CD8-positive, alpha-beta T cell (primary cell): ENCODE measurements at regions of chr6 and their contacts with region 1.

Region 1: DNA sequence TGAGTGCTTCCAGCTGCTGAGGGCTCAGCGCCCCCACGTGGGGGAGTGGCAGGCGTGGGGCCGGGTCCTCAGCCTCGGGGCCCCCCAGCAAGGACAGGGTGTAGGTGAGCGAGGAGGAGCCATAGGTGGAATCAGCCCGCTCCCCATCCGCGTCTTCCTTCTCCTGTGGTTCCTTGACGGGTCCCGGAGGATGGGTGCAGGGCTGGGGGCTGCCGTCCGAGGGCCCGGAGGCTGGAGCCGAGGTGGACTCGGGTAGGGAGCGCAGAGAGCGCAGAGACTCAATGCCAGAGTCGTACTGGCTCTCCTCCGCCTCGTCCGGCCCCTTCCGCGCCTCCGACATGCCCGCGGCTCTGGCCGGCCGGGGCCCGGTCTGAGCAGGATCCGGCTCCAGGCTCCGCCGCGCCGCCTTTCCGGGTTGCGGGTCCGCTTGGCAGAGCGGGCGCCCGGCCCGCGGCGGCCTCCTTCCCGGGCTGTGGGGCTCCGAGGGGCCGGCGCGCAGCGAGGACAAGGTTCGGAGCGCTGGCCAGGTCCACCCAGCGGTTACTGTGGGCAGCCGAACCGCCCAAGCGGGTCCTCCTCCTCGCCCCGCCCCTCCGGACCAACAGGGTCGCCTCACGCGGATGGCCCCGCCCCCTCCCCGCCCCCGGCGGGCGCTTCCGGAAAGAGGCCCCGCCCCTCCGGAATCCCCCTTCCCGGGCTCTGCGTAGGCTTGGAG is at the start of gene NFKBIE:
- DNase-seq: peak; percentile 87 to 96 (median 94)
- ATAC-seq: peak; percentile 82
- H3K4me3 ChIP-seq: peak within 1 kb of the TSS; percentile 90 to 91
- H3K4me3 Mint-ChIP-seq: peak within 1 kb of the TSS; percentile 83
- H3K27ac ChIP-seq: peak within 1 kb of the TSS; percentile 78 to 89
- H3K27ac Mint-ChIP-seq: peak within 1 kb of the TSS; percentile 85
- H3K4me1 ChIP-seq: peaks cover 31% of the 10 kb centered on the region
- H3K4me1 Mint-ChIP-seq: peaks cover 46% of the 10 kb centered on the region
- H3K27me3 ChIP-seq: peaks cover 0 to 8% of the 10 kb centered on the region in 2 experiments
- H3K27me3 Mint-ChIP-seq: peaks cover 8% of the 10 kb centered on the region
- CTCF ChIP-seq: peak; percentile 44
- total RNA-seq, gene NFKBIE: 44.5 to 45.8 TPM

Region 2: GRCh38 chr6:44221291-44221960 is 43.7 kb before region 1 on chr6:
- CTCF ChIA-PET with region 1: interaction called, 12 read pairs
- POLR2A ChIA-PET with region 1: no interaction called
- intact Hi-C with region 1: loop called (anchors 1 kb)
- DNase-seq: peak; percentile 53 to 85 (median 72)
- ATAC-seq: peak; percentile 60
- H3K4me3 ChIP-seq: no peak overlapping the region
- H3K4me3 Mint-ChIP-seq: no peak overlapping the region
- H3K27ac ChIP-seq: no peak overlapping the region
- H3K27ac Mint-ChIP-seq: no peak overlapping the region
- H3K4me1 ChIP-seq: peaks cover 28% of the 10 kb centered on the region
- H3K4me1 Mint-ChIP-seq: peaks cover 41% of the 10 kb centered on the region
- H3K27me3 ChIP-seq: peaks cover 0 to 8% of the 10 kb centered on the region in 2 experiments
- H3K27me3 Mint-ChIP-seq: peaks cover 3% of the 10 kb centered on the region
- CTCF ChIP-seq: peak; percentile 47

Region 3: GRCh38 chr6:44285552-44286284 is 20.6 kb after region 1 on chr6:
- CTCF ChIA-PET with region 1: no interaction called
- POLR2A ChIA-PET with region 1: no interaction called
- intact Hi-C with region 1: no loop called
- DNase-seq: no peak
- ATAC-seq: no peak
- H3K4me3 ChIP-seq: no peak overlapping the region
- H3K4me3 Mint-ChIP-seq: no peak overlapping the region
- H3K27ac ChIP-seq: no peak overlapping the region
- H3K27ac Mint-ChIP-seq: no peak overlapping the region
- H3K4me1 ChIP-seq: no peaks in the 10 kb centered on the region
- H3K4me1 Mint-ChIP-seq: no peaks in the 10 kb centered on the region
- H3K27me3 ChIP-seq: peaks cover 8 to 9% of the 10 kb centered on the region in 2 experiments
- H3K27me3 Mint-ChIP-seq: peaks cover 64% of the 10 kb centered on the region
- CTCF ChIP-seq: no peak

Region 4: GRCh38 chr6:44304282-44305199 is 39.4 kb after region 1 on chr6:
- CTCF ChIA-PET with region 1: interaction called, 73 read pairs
- POLR2A ChIA-PET with region 1: no interaction called
- intact Hi-C with region 1: loop called (anchors 1 kb)
- DNase-seq: peak; percentile 9 to 67 (median 49)
- ATAC-seq: peak; percentile 94
- H3K4me3 ChIP-seq: no peak overlapping the region
- H3K4me3 Mint-ChIP-seq: no peak overlapping the region
- H3K27ac ChIP-seq: no peak overlapping the region
- H3K27ac Mint-ChIP-seq: no peak overlapping the region
- H3K4me1 ChIP-seq: no peaks in the 10 kb centered on the region
- H3K4me1 Mint-ChIP-seq: no peaks in the 10 kb centered on the region
- H3K27me3 ChIP-seq: no peaks in the 10 kb centered on the region
- H3K27me3 Mint-ChIP-seq: no peaks in the 10 kb centered on the region
- CTCF ChIP-seq: peak; percentile 80

Region 5: DNA sequence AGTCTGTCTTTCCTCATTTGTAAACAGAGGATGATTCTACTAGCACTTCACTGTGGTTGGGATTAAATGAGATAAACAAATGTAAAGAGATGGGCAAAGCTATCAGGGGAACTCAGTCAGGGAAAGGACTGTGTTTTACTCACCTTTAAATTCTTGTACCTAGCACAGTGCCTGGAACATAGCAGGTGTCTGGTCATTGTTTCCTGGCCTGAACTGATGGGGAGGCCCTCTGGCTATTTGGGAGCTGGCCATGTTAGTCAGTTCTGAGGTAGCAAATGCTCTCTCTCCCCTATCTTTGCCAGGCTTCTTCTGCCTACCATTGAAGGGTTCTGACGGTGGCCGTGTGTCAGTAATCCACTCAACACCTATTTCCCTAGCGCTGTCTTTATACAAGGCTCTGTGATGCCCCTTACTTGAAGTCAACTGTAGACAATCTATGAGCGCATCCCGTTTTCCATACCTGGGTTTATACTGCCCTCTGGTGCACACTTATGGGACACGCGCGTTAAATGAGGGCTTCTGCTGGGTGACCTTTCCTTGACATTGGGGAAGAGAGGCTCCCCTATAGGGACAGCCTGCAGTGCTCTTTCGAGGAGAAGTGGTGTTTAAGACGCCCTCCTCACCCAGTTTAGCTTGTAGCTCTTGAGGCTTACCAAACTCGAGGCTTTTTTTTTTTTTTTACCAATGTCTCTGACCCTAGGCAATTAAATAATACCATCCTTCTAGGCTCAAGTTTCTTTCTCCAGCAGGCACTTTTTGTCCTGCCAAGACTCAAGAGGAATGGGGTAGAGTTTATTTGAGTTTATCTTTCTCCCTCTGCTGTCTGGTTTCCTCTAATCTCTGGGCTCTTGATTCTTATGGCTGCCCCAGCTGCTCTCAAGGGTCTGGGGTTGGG is 73.3 kb after region 1 on chr6:
- CTCF ChIA-PET with region 1: interaction called, 79 read pairs
- POLR2A ChIA-PET with region 1: no interaction called
- intact Hi-C with region 1: loop called in 1 of 2 experiments (anchors 1 kb)
- DNase-seq: peak; percentile 33 to 78 (median 63)
- ATAC-seq: peak; percentile 94
- H3K4me3 ChIP-seq: no peak overlapping the region
- H3K4me3 Mint-ChIP-seq: no peak overlapping the region
- H3K27ac ChIP-seq: no peak overlapping the region
- H3K27ac Mint-ChIP-seq: no peak overlapping the region
- H3K4me1 ChIP-seq: no peaks in the 10 kb centered on the region
- H3K4me1 Mint-ChIP-seq: no peaks in the 10 kb centered on the region
- H3K27me3 ChIP-seq: peaks cover 0 to 3% of the 10 kb centered on the region in 2 experiments
- H3K27me3 Mint-ChIP-seq: peaks cover 18% of the 10 kb centered on the region
- CTCF ChIP-seq: peak; percentile 78

Region 6: GRCh38 chr6:44456070-44456965 is 191.2 kb after region 1 on chr6:
- CTCF ChIA-PET with region 1: interaction called, 3 read pairs
- POLR2A ChIA-PET with region 1: no interaction called
- intact Hi-C with region 1: loop called (anchors 2 to 5 kb)
- DNase-seq: peak in 6 of 9 experiments; percentile 7 to 64 (median 36)
- ATAC-seq: peak; percentile 62
- H3K4me3 ChIP-seq: no peak overlapping the region
- H3K4me3 Mint-ChIP-seq: no peak overlapping the region
- H3K27ac ChIP-seq: no peak overlapping the region
- H3K27ac Mint-ChIP-seq: no peak overlapping the region
- H3K4me1 ChIP-seq: no peaks in the 10 kb centered on the region
- H3K4me1 Mint-ChIP-seq: no peaks in the 10 kb centered on the region
- H3K27me3 ChIP-seq: no peaks in the 10 kb centered on the region
- H3K27me3 Mint-ChIP-seq: no peaks in the 10 kb centered on the region
- CTCF ChIP-seq: peak; percentile 69